ENCODE measurements at regions of chr2 and their contacts with region 1.

Region 1: GRCh38 chr2:196076778-196077568 is 8.3 kb upstream of the DNAH7 start:
- DNase-seq: no peak
- H3K4me3 ChIP-seq: no peak overlapping the region
- H3K27ac ChIP-seq: no peak overlapping the region
- H3K4me1 ChIP-seq: peaks cover 0 to 6% (median 0%) of the 10 kb centered on the region in 4 donors
- H3K27me3 ChIP-seq: no peaks in the 10 kb centered on the region
- CTCF ChIP-seq: no peak
- EP300 ChIP-seq: no peak
- POLR2A ChIP-seq: no peak

Region 2: DNA sequence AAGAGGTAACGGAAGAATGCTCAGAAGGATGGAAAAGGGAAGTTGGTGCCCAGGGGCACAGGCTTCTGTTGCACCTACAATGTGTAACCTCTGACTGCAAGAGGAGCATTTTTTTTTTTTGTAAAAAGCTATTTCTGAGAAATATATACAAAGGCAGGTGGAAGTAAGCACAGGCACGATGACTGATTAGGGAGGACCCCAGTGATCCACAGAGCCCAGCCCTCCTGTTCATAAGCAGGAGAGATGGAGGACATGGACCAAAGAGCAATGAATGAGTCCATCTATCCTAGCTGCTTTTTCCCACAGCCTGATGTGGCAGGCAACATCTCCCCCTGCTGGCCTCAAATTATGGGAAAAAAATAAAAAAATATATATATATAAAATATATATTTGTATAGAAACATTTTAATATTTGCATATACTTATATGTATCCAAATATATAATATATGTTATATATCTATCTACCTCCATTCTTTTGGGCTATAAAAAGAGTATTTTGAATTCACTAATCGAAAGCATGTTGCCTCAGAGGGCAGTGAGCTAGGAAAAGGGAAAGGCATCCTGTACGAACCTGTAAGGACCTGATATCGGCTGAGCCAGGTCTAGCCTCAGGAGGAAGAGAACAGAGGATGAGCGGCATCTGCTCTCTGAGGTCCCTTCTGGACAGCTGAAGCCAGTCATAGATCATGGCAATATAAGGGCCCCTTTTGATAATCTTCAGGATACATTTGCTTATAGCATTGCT is 260.4 kb after region 1 on chr2:
- intact Hi-C with region 1: loop called (anchors 5 kb)
- DNase-seq: peak; percentile 53
- H3K4me3 ChIP-seq: no peak overlapping the region
- H3K27ac ChIP-seq: no peak overlapping the region
- H3K4me1 ChIP-seq: peaks cover 0 to 21% (median 12%) of the 10 kb centered on the region in 4 donors
- H3K27me3 ChIP-seq: no peaks in the 10 kb centered on the region
- CTCF ChIP-seq: peak; percentile 21 to 42 (median 28)
- EP300 ChIP-seq: no peak
- POLR2A ChIP-seq: no peak